Naive thymus-derived CD8-positive, alpha-beta T cell (primary cell): ENCODE measurements at regions of chr2 and their contacts with region 1.

Region 1: GRCh38 chr2:240566203-240567136 is 1.8 kb upstream of the RNPEPL1 start:
- DNase-seq: peak; percentile 91 to 98 (median 92)
- ATAC-seq: peak; percentile 55 to 61
- H3K4me3 Mint-ChIP-seq: peak overlapping the region; percentile 86 to 95 (median 94)
- H3K27ac Mint-ChIP-seq: peak overlapping the region; percentile 84 to 99 (median 97)
- H3K4me1 Mint-ChIP-seq: peaks cover 48 to 80% (median 76%) of the 10 kb centered on the region in 4 donors
- H3K27me3 Mint-ChIP-seq: no peaks in the 10 kb centered on the region

Region 2: GRCh38 chr2:240513549-240514287 is 52.8 kb before region 1 on chr2:
- POLR2A ChIA-PET with region 1: interaction called, 14 read pairs
- DNase-seq: peak; percentile 67 to 89 (median 75)
- ATAC-seq: peak; percentile 99 to 100
- H3K4me3 Mint-ChIP-seq: peak overlapping the region in 1 of 10 donors; percentile 48
- H3K27ac Mint-ChIP-seq: peak overlapping the region in 8 of 10 donors; percentile 13 to 82 (median 51)
- H3K4me1 Mint-ChIP-seq: peaks cover 8 to 16% (median 13%) of the 10 kb centered on the region in 4 donors
- H3K27me3 Mint-ChIP-seq: peaks cover 0 to 4% (median 0%) of the 10 kb centered on the region in 5 donors

Region 3: DNA sequence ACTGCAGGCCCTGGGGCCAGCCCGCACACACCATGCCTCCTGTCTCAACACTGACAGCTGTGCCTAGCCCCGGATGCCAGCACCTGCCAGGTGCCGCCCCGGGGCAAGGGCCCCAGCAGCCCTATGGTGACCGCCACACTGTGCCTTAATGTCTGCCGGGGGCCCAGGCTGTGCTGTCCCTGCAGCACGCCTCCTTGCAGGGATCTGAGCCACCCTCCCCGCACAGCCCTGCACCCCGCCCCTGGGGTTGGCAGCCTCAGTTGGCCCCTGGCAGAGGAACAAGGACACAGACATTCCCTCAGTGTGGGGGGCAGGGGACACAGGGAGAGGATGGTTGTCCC is 11.6 kb after region 1 on chr2:
- POLR2A ChIA-PET with region 1: interaction called, 461 read pairs
- DNase-seq: no peak
- ATAC-seq: no peak
- H3K4me3 Mint-ChIP-seq: peak overlapping the region in 1 of 10 donors; percentile 45
- H3K27ac Mint-ChIP-seq: peak overlapping the region in 3 of 10 donors; percentile 44 to 52 (median 47)
- H3K4me1 Mint-ChIP-seq: peaks cover 19 to 43% (median 36%) of the 10 kb centered on the region in 4 donors
- H3K27me3 Mint-ChIP-seq: no peaks in the 10 kb centered on the region